ENCODE measurements at regions of chr2 and their contacts with region 1.

Region 1: GRCh38 chr2:143110758-143111428 is 18.3 kb upstream of the ARHGAP15 start:
- DNase-seq: no peak
- ATAC-seq: peak; percentile 81
- H3K4me3 Mint-ChIP-seq: no peak overlapping the region
- H3K27ac Mint-ChIP-seq: peak overlapping the region; percentile 50
- H3K4me1 Mint-ChIP-seq: peaks cover 8% of the 10 kb centered on the region
- H3K27me3 Mint-ChIP-seq: no peaks in the 10 kb centered on the region
- CTCF ChIP-seq: peak; percentile 77

Region 2: GRCh38 chr2:143121079-143121478 is 10.2 kb after region 1 on chr2:
- CTCF ChIA-PET with region 1: interaction called, 11 read pairs
- POLR2A ChIA-PET with region 1: no interaction called
- intact Hi-C with region 1: loop called (anchors 1 kb)
- DNase-seq: no peak
- ATAC-seq: peak; percentile 45
- H3K4me3 Mint-ChIP-seq: peak overlapping the region; percentile 50
- H3K27ac Mint-ChIP-seq: no peak overlapping the region
- H3K4me1 Mint-ChIP-seq: peaks cover 14% of the 10 kb centered on the region
- H3K27me3 Mint-ChIP-seq: no peaks in the 10 kb centered on the region
- CTCF ChIP-seq: no peak

Region 3: GRCh38 chr2:143205106-143205764 is 94.3 kb after region 1 on chr2:
- CTCF ChIA-PET with region 1: interaction called, 27 read pairs
- POLR2A ChIA-PET with region 1: interaction called, 3 read pairs
- intact Hi-C with region 1: loop called (anchors 1 kb)
- DNase-seq: no peak
- ATAC-seq: peak; percentile 42
- H3K4me3 Mint-ChIP-seq: no peak overlapping the region
- H3K27ac Mint-ChIP-seq: peak overlapping the region; percentile 26
- H3K4me1 Mint-ChIP-seq: peaks cover 28% of the 10 kb centered on the region
- H3K27me3 Mint-ChIP-seq: no peaks in the 10 kb centered on the region
- CTCF ChIP-seq: no peak

Region 4: GRCh38 chr2:143225931-143226330 is 115.0 kb after region 1 on chr2:
- CTCF ChIA-PET with region 1: interaction called, 128 read pairs
- POLR2A ChIA-PET with region 1: interaction called, 4 read pairs
- intact Hi-C with region 1: loop called (anchors 1 kb)
- DNase-seq: no peak
- ATAC-seq: no peak
- H3K4me3 Mint-ChIP-seq: no peak overlapping the region
- H3K27ac Mint-ChIP-seq: no peak overlapping the region
- H3K4me1 Mint-ChIP-seq: peaks cover 18% of the 10 kb centered on the region
- H3K27me3 Mint-ChIP-seq: no peaks in the 10 kb centered on the region
- CTCF ChIP-seq: no peak

Measured in activated B cell treated with CpG ODN at 0.5 μM for 24 hours (primary cell).